PC-3 (cell line): ENCODE measurements at regions of chr13 and their contacts with region 1.

Region 1: GRCh38 chr13:42478531-42479156 is 95.3 kb upstream of the TNFSF11 start:
- DNase-seq: peak; percentile 53
- ATAC-seq: peak; percentile 67
- H3K4me3 ChIP-seq: no peak overlapping the region
- H3K27ac ChIP-seq: no peak overlapping the region
- H3K4me1 ChIP-seq: no peaks in the 10 kb centered on the region
- H3K27me3 ChIP-seq: no peaks in the 10 kb centered on the region
- CTCF ChIP-seq: peak; percentile 64

Region 2: DNA sequence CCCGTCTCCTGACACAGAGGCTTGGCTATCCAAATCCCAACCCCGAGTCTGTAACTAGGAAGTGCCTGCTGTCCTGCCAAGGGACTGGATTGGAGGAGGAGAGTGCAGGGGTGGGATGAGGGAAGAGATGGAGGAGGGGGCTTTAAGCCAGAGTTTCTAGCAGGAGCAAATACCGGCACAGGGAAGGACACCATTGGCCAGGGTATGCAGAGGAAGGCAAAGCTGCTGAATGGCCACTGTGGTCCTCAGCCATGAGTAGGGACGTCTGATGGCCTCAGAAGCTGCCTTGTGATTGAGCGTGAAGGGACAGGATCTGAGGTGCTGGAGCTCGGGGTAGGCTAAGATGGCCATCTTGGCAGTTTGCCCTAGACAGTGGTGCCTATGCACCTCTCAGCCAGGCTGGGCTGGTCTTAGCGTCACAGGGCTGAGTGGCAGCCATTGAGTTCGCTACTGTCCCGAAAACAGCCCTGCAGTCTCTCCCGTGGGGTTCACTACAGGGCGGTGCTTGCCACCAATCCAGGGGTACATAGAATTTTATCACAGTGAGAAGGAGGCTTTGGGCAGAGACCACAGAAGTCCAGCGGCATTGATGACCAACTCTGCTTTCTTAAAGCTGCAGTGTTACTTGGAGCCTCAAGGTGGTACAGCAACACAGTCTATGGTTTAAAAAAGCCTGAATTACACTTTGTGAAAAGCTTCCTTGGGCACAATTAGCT is 144.9 kb before region 1 on chr13:
- CTCF ChIA-PET with region 1: interaction called, 20 read pairs
- POLR2A ChIA-PET with region 1: no interaction called
- intact Hi-C with region 1: loop called (anchors 1 kb)
- DNase-seq: peak; percentile 62
- ATAC-seq: peak; percentile 96
- H3K4me3 ChIP-seq: peak overlapping the region; percentile 66
- H3K27ac ChIP-seq: no peak overlapping the region
- H3K4me1 ChIP-seq: peaks cover 10% of the 10 kb centered on the region; the same call in 1 of the 2 replicates
- H3K27me3 ChIP-seq: no peaks in the 10 kb centered on the region
- CTCF ChIP-seq: peak; percentile 77

Region 3: GRCh38 chr13:42363941-42364612 is 114.6 kb before region 1 on chr13:
- CTCF ChIA-PET with region 1: interaction called, 11 read pairs
- POLR2A ChIA-PET with region 1: no interaction called
- intact Hi-C with region 1: no loop called
- DNase-seq: peak; percentile 67
- ATAC-seq: peak; percentile 98
- H3K4me3 ChIP-seq: no peak overlapping the region
- H3K27ac ChIP-seq: peak overlapping the region; percentile 17
- H3K4me1 ChIP-seq: peaks cover 11% of the 10 kb centered on the region
- H3K27me3 ChIP-seq: no peaks in the 10 kb centered on the region
- CTCF ChIP-seq: peak; percentile 46; the same call in 1 of the 2 replicates

Region 4: DNA sequence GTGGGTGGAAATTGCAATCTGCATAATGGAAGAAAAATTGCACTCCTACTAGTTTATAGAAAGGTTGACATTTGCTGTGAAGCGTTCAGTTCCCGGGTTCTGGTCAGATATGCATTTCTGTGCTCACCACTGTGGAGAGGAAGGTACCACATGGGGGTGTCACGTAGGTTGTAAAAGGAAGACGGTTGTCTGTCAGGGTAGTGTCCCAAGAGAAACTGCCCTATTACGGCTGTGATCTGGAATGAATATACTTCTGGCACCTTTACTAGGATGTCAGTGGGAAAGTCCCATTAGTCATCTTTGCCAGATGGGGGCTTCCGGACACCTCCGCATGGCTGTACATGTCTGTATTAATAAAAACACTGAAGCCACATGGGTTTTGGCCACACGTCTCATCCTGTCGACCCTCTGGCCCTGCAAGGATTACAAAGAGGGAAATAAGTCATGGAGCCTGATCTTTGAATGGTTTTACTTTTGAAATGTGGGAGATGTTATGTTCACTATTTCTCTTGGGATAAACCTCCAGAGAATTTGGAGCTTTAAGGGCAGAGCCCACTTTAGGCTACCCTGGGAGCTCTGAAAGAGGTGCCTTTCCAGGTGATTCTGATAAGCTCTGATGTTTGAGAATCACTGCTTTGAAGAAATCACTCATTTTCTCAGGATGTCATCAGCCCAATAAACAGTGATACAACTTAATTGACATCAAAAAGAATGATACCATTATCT is 72.8 kb before region 1 on chr13:
- CTCF ChIA-PET with region 1: no interaction called
- POLR2A ChIA-PET with region 1: no interaction called
- intact Hi-C with region 1: no loop called
- DNase-seq: peak; percentile 10
- ATAC-seq: no peak; the same call in 1 of the 2 replicates
- H3K4me3 ChIP-seq: no peak overlapping the region
- H3K27ac ChIP-seq: no peak overlapping the region
- H3K4me1 ChIP-seq: no peaks in the 10 kb centered on the region; the same call in 1 of the 2 replicates
- H3K27me3 ChIP-seq: no peaks in the 10 kb centered on the region
- CTCF ChIP-seq: no peak

Region 5: DNA sequence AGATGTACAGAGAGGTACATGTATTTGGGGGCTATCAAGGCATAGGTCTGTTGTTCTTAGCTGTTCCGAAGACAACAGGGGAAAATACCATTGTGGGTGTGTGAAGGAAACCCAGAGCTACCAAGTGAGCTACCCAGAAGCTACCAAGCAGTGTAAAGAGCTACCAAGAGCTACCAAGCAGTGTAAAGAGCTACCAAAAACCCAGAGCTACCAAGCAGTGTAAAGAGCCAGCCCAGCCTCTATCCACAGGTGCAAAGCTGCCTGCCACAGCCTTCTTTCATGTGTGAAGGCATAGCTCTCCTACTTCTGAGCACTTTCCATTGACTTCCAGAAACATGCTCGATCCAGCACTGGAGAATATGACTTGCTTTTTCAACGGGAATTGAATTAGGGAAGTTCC is 61.0 kb before region 1 on chr13:
- CTCF ChIA-PET with region 1: no interaction called
- POLR2A ChIA-PET with region 1: no interaction called
- intact Hi-C with region 1: no loop called
- DNase-seq: no peak
- ATAC-seq: no peak
- H3K4me3 ChIP-seq: no peak overlapping the region
- H3K27ac ChIP-seq: no peak overlapping the region
- H3K4me1 ChIP-seq: no peaks in the 10 kb centered on the region
- H3K27me3 ChIP-seq: no peaks in the 10 kb centered on the region
- CTCF ChIP-seq: no peak

Region 6: GRCh38 chr13:42440191-42440550 is 38.5 kb before region 1 on chr13:
- CTCF ChIA-PET with region 1: no interaction called
- POLR2A ChIA-PET with region 1: no interaction called
- intact Hi-C with region 1: no loop called
- DNase-seq: no peak
- ATAC-seq: no peak
- H3K4me3 ChIP-seq: no peak overlapping the region
- H3K27ac ChIP-seq: no peak overlapping the region
- H3K4me1 ChIP-seq: no peaks in the 10 kb centered on the region
- H3K27me3 ChIP-seq: no peaks in the 10 kb centered on the region
- CTCF ChIP-seq: no peak

Region 7: DNA sequence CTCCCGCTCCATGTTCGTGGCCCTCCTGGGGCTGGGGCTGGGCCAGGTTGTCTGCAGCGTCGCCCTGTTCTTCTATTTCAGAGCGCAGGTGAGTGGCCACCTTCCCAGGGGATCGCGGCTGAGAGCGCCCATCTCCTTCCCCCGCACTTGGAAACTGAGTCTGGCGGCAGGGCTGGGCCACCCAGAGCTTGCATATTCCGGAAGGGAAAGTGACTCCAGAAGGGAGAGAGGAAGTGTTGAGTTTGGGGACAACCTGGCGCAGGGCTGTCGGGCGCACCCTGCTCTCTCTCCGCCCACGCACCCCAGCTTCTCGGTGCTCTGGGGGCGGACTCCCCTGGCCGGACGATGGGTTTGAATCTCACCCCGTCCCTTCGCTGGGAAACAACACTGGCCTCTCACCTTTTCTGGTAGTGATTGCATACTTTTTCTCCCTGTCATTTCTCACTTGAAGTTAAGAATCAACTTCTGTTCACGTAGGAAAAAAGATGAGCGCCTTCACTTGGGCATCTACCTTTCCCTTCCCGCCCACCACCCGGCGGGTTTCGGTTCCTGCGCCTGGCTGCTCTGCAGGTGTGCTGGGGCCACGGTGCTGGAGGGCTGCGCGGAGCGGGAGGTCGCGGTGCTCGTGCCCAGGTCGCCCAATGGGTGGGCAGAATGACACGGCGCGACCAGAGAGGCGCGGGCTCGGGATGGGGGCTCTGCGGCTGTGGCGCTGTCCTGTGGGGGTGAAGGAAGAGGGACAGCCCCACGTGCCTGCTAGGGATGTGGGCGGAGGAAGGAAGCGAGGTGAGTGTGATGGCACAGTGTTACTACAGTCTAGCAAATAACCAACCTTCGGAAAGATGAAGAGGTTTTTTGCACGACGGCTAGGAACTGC is 96.0 kb after region 1 on chr13:
- CTCF ChIA-PET with region 1: no interaction called
- POLR2A ChIA-PET with region 1: no interaction called
- intact Hi-C with region 1: no loop called
- DNase-seq: no peak
- ATAC-seq: no peak
- H3K4me3 ChIP-seq: no peak overlapping the region
- H3K27ac ChIP-seq: no peak overlapping the region
- H3K4me1 ChIP-seq: no peaks in the 10 kb centered on the region
- H3K27me3 ChIP-seq: no peaks in the 10 kb centered on the region
- CTCF ChIP-seq: no peak